Activated T-helper 2 cell treated with anti-CD3 and anti-CD28 coated beads, Interferon-gamma antibody, Interleukin-2, Interleukin-4, amounts not matched to agents 10 μg/mL and 5 μg/mL and 100 μg/mL, durations not matched to agents 14 hours and 24 hours and 36 hours (primary cell): ENCODE measurements at regions of chr3 and their contacts with region 1.

Region 1: DNA sequence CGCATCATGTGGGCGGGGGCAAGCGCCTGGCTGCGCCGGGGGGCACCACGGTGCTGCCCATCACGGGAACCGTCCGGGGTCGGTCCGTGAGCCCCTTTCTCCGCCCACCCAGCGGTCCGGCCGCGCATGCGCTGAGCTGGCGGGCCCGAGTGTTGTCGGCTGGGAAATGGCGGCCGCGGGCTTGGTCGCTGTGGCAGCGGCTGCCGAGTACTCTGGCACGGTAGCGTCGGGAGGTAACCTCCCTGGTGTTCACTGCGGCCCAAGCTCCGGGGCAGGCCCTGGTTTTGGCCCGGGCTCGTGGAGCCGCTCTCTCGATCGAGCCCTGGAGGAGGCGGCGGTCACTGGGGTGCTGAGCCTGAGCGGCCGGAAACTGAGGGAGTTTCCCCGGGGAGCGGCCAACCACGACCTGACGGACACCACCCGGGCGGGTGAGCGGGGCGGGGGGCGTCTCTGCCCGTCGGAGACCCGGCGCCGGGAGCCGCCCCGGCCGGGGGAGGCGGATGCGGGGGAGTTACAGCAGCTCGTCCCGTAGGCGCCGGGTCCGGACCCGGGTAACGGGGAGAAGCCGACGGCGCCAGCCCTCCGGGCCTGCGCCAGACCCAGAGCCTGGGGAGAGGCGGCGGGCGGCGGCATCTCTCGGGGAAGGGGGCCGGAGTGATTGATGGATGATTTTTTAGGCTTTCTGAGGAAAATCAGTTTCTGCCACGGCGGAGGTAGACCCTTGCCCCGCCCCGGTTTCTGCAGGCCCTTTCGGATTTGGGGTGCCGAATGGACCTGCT is at the start of gene LRCH3:
- DNase-seq: peak; percentile 81
- H3K4me3 Mint-ChIP-seq: peak within 1 kb of the TSS; percentile 94
- H3K27ac Mint-ChIP-seq: peak within 1 kb of the TSS; percentile 98
- H3K4me1 Mint-ChIP-seq: peaks cover 36% of the 10 kb centered on the region
- H3K27me3 Mint-ChIP-seq: no peaks in the 10 kb centered on the region
- total RNA-seq, gene LRCH3: 57.0 and 64.1 TPM in 2 replicates

Region 2: GRCh38 chr3:197445896-197446711 is 345.2 kb before region 1 on chr3:
- intact Hi-C with region 1: no loop called
- DNase-seq: no peak
- H3K4me3 Mint-ChIP-seq: no peak overlapping the region
- H3K27ac Mint-ChIP-seq: no peak overlapping the region
- H3K4me1 Mint-ChIP-seq: peaks cover 6% of the 10 kb centered on the region
- H3K27me3 Mint-ChIP-seq: peaks cover 22% of the 10 kb centered on the region

Region 3: GRCh38 chr3:197711973-197712707 is 79.2 kb before region 1 on chr3:
- intact Hi-C with region 1: loop called (anchors 5 kb)
- DNase-seq: peak; percentile 80
- H3K4me3 Mint-ChIP-seq: peak overlapping the region; percentile 75
- H3K27ac Mint-ChIP-seq: peak overlapping the region; percentile 92
- H3K4me1 Mint-ChIP-seq: peaks cover 33% of the 10 kb centered on the region
- H3K27me3 Mint-ChIP-seq: no peaks in the 10 kb centered on the region

Region 4: GRCh38 chr3:197736491-197737318 is 54.6 kb before region 1 on chr3 and contains the start of gene RUBCN:
- intact Hi-C with region 1: no loop called
- DNase-seq: peak; percentile 93
- H3K4me3 Mint-ChIP-seq: peak within 1 kb of the TSS; percentile 93
- H3K27ac Mint-ChIP-seq: peak within 1 kb of the TSS; percentile 91
- H3K4me1 Mint-ChIP-seq: peaks cover 25% of the 10 kb centered on the region
- H3K27me3 Mint-ChIP-seq: no peaks in the 10 kb centered on the region
- total RNA-seq, gene RUBCN: 41.7 and 43.6 TPM in 2 replicates

Region 5: GRCh38 chr3:197749601-197750395 is 41.5 kb before region 1 on chr3 and contains the start of gene FYTTD1:
- intact Hi-C with region 1: loop called (anchors 1 kb)
- DNase-seq: peak; percentile 81
- H3K4me3 Mint-ChIP-seq: peak within 1 kb of the TSS; percentile 93
- H3K27ac Mint-ChIP-seq: peak within 1 kb of the TSS; percentile 93
- H3K4me1 Mint-ChIP-seq: peaks cover 30% of the 10 kb centered on the region
- H3K27me3 Mint-ChIP-seq: peaks cover 4% of the 10 kb centered on the region
- total RNA-seq, gene FYTTD1: 57.5 and 63.0 TPM in 2 replicates

Region 6: GRCh38 chr3:197801891-197802778 is 10.8 kb after region 1 on chr3:
- intact Hi-C with region 1: loop called (anchors 1 kb)
- DNase-seq: no peak
- H3K4me3 Mint-ChIP-seq: no peak overlapping the region
- H3K27ac Mint-ChIP-seq: peak overlapping the region; percentile 23
- H3K4me1 Mint-ChIP-seq: peaks cover 38% of the 10 kb centered on the region
- H3K27me3 Mint-ChIP-seq: no peaks in the 10 kb centered on the region

Region 7: DNA sequence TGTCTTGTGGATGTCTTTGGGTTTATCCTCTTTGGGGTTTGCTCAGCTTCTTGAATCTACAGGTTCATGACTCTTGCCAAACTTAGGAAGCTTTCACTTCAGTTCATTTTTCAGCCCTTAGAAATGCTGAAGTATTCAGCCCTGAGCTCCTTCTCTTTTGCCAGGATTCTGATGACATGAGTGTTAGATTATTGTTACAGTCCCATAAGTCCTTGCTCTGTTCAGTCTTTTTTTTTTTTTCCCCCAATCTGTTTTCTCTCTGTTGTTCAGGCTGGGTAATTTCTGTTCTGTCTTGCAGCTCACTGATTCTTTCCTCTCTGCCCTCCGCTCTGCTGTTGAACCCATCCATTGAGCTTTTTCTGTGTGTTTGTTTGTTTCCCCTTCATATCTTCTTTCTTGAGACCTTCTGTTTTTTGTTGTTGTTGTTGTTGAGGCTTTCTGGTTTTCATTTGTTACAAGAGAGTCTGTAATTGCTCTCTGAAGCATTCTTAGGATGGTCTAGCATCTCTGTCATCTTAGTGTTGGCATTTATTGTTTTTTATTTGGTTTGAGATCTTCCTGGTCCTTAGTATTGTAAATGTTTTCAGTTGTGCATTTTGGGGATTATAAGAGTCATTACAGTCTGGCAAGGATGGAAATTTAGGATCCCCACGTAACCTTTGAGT is 18.2 kb after region 1 on chr3:
- intact Hi-C with region 1: loop called (anchors 2 kb)
- DNase-seq: no peak
- H3K4me3 Mint-ChIP-seq: no peak overlapping the region
- H3K27ac Mint-ChIP-seq: peak overlapping the region; percentile 3
- H3K4me1 Mint-ChIP-seq: peaks cover 23% of the 10 kb centered on the region
- H3K27me3 Mint-ChIP-seq: no peaks in the 10 kb centered on the region

Region 8: DNA sequence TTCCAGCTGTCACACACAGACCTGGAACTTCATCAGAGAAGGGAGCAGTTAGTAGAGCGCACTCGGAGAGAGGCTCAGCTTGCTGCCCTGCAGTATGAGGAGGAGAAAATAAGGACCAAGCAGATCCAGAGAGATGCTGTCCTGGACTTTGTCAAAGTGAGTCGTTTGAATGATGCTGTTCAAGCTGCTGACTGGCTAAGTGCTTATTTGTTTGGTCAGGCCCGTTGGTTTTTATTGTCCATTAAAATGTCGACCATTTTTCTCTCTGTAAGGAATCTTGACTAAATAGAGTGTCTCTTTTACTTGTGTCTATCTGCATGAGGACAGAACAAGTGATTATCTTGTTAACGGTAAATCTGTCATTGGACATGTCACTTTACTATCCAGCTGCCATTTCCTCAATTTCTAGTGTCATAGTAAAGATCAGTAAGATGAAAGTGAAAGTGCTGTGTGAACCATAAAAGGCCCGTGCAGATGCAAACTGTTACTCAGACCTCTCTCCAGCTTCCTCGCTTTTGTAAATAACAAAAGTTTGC is 56.6 kb after region 1 on chr3:
- intact Hi-C with region 1: loop called (anchors 10 kb)
- DNase-seq: no peak
- H3K4me3 Mint-ChIP-seq: peak overlapping the region; percentile 63
- H3K27ac Mint-ChIP-seq: peak overlapping the region; percentile 74
- H3K4me1 Mint-ChIP-seq: peaks cover 25% of the 10 kb centered on the region
- H3K27me3 Mint-ChIP-seq: no peaks in the 10 kb centered on the region

Region 9: DNA sequence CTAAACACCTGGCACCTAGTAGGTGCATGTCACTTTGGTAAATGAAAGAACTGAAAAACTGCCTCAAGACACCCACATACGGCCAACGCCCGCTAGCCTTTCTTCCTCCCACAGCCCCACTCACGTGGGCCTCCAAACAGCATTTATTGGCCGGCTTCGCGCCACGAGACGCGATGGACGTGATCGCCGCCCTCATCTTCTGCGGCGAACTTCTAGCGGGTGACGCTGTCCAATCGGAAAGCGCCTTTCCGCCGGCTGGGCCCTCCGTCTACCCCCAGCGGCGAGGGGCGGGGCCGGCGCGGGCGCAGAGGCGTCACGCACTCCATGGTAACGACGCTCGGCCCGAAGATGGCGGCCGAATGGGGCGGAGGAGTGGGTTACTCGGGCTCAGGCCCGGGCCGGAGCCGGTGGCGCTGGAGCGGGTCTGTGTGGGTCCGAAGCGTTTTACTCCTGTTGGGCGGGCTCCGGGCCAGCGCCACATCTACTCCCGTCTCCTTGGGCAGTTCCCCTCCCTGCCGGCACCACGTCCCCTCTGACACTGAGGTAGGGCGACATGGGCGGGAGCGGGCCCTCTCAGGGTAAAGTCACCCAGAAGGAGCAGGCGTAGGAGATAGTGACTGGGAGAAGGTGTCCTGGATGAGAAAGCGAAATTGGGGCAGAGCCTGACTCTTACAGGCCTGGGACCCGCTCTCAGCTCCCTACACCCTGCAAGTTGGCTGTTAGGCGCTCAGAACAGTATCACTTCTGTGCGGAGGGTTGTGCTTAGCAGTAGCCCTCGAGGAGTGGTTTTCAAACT is 168.8 kb after region 1 on chr3 and contains the start of gene LMLN:
- intact Hi-C with region 1: loop called (anchors 5 kb)
- DNase-seq: peak; percentile 95
- H3K4me3 Mint-ChIP-seq: peak within 1 kb of the TSS; percentile 88
- H3K27ac Mint-ChIP-seq: peak within 1 kb of the TSS; percentile 92
- H3K4me1 Mint-ChIP-seq: peaks cover 39% of the 10 kb centered on the region
- H3K27me3 Mint-ChIP-seq: peaks cover 2% of the 10 kb centered on the region
- total RNA-seq, gene LMLN: 4.3 and 4.4 TPM in 2 replicates